Activated CD4-positive, alpha-beta T cell treated with anti-CD3 and anti-CD28 coated beads, Interleukin-2, amount 10 ng/mL, durations not matched to agents 24 days and 14 days (primary cell): ENCODE measurements at regions of chr1 and their contacts with region 1.

Region 1: DNA sequence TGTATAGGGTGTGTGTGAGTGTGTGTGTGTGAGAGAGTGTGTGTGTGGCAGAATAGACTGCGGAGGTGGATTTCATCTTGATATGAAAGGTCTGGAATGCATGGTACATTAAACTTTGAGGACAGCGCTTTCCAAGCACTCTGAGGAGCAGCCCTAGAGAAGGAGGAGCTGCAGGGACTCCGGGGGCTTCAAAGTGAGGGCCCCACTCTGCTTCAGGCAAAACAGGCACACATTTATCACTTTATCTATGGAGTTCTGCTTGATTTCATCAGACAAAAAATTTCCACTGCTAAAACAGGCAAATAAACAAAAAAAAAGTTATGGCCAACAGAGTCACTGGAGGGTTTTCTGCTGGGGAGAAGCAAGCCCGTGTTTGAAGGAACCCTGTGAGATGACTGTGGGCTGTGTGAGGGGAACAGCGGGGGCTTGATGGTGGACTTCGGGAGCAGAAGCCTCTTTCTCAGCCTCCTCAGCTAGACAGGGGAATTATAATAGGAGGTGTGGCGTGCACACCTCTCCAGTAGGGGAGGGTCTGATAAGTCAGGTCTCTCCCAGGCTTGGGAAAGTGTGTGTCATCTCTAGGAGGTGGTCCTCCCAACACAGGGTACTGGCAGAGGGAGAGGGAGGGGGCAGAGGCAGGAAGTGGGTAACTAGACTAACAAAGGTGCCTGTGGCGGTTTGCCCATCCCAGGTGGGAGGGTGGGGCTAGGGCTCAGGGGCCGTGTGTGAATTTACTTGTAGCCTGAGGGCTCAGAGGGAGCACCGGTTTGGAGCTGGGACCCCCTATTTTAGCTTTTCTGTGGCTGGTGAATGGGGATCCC is 18.3 kb upstream of the HDAC1 start:
- DNase-seq: peak; percentile 88
- H3K4me3 Mint-ChIP-seq: peak overlapping the region; percentile 88
- H3K27ac Mint-ChIP-seq: peak overlapping the region; percentile 86
- H3K4me1 Mint-ChIP-seq: peaks cover 56% of the 10 kb centered on the region
- H3K27me3 Mint-ChIP-seq: no peaks in the 10 kb centered on the region

Region 2: GRCh38 chr1:32321712-32322291 is 48.2 kb after region 1 on chr1:
- intact Hi-C with region 1: loop called (anchors 5 kb)
- DNase-seq: peak; percentile 78
- H3K4me3 Mint-ChIP-seq: peak overlapping the region; percentile 65
- H3K27ac Mint-ChIP-seq: peak overlapping the region; percentile 87
- H3K4me1 Mint-ChIP-seq: peaks cover 36% of the 10 kb centered on the region
- H3K27me3 Mint-ChIP-seq: no peaks in the 10 kb centered on the region

Region 3: GRCh38 chr1:32470991-32471694 is 197.5 kb after region 1 on chr1:
- intact Hi-C with region 1: no loop called
- DNase-seq: peak; percentile 59
- H3K4me3 Mint-ChIP-seq: no peak overlapping the region
- H3K27ac Mint-ChIP-seq: no peak overlapping the region
- H3K4me1 Mint-ChIP-seq: no peaks in the 10 kb centered on the region
- H3K27me3 Mint-ChIP-seq: peaks cover 21% of the 10 kb centered on the region